ENCODE measurements at regions of chr2 and their contacts with region 1.

Region 1: GRCh38 chr2:190979906-190980629 is 33.9 kb downstream of the STAT1 start:
- DNase-seq: no peak
- H3K4me3 ChIP-seq: no peak overlapping the region
- H3K4me3 Mint-ChIP-seq: no peak overlapping the region
- H3K27ac ChIP-seq: peak overlapping the region in 1 of 2 donors; percentile 39
- H3K27ac Mint-ChIP-seq: peak overlapping the region in 5 of 7 donors; percentile 41 to 84 (median 64)
- H3K4me1 ChIP-seq: no peaks in the 10 kb centered on the region
- H3K4me1 Mint-ChIP-seq: no peaks in the 10 kb centered on the region
- H3K27me3 ChIP-seq: no peaks in the 10 kb centered on the region
- H3K27me3 Mint-ChIP-seq: no peaks in the 10 kb centered on the region
- CTCF ChIP-seq: no peak

Region 2: GRCh38 chr2:189474526-189474925 is 1505.5 kb before region 1 on chr2:
- intact Hi-C with region 1: loop called in 1 of 2 experiments (anchors 5 kb)
- DNase-seq: no peak
- H3K4me3 ChIP-seq: no peak overlapping the region
- H3K4me3 Mint-ChIP-seq: no peak overlapping the region
- H3K27ac ChIP-seq: no peak overlapping the region
- H3K27ac Mint-ChIP-seq: peak overlapping the region in 2 of 7 donors; percentile 21 to 26
- H3K4me1 ChIP-seq: no peaks in the 10 kb centered on the region
- H3K4me1 Mint-ChIP-seq: no peaks in the 10 kb centered on the region
- H3K27me3 ChIP-seq: no peaks in the 10 kb centered on the region
- H3K27me3 Mint-ChIP-seq: no peaks in the 10 kb centered on the region
- CTCF ChIP-seq: no peak

Region 3: DNA sequence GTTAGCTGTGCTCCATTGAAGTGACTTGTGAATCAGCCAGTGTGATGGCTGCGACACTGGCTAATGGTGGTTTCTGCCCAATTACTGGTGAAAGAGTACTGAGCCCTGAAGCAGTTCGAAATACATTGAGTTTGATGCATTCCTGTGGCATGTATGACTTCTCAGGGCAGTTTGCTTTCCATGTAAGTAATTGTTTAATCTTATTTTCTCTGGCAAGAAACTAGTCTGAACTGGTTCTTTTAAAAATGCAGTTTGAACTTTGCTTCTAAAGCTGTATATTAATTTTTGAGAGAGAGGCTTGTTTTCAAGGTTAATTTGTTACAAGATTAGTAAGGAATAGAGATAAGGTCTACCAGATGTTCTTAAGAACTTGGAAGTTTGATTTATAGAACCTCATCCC is 52.8 kb before region 1 on chr2:
- intact Hi-C with region 1: no loop called
- DNase-seq: no peak
- H3K4me3 ChIP-seq: no peak overlapping the region
- H3K4me3 Mint-ChIP-seq: no peak overlapping the region
- H3K27ac ChIP-seq: no peak overlapping the region
- H3K27ac Mint-ChIP-seq: peak overlapping the region in 1 of 7 donors; percentile 42
- H3K4me1 ChIP-seq: no peaks in the 10 kb centered on the region
- H3K4me1 Mint-ChIP-seq: peaks cover 10% of the 10 kb centered on the region
- H3K27me3 ChIP-seq: no peaks in the 10 kb centered on the region
- H3K27me3 Mint-ChIP-seq: no peaks in the 10 kb centered on the region
- CTCF ChIP-seq: no peak

Region 4: DNA sequence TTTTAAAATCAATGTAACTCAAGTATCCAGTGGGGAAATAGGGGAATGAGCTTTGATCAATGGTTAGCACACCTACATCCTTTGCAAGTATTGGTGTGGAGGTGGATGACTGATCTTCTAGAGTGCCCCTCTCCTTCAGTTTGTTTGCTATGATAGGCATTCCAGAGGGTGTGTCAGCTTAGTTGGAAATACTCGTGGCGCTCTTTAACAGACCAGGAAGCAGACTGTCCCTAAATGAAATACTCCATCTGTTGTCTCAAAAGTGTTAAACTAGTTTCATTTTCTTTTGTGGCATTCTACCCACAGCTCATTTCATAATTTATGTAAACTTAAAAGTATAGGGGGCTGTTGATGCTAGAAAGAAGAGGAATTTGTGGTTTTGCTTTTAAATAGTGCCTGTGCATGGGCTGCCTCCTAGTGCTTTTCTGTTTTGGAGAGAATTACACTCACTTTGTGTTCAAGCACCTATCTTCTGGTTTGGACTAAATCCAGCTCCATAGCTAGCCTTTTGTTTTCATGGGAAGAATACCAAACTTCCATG is 32.3 kb before region 1 on chr2:
- intact Hi-C with region 1: no loop called
- DNase-seq: peak; percentile 4 to 11 (median 7)
- H3K4me3 ChIP-seq: peak overlapping the region in 2 of 3 experiments; percentile 5 to 46
- H3K4me3 Mint-ChIP-seq: peak overlapping the region; percentile 25 to 68
- H3K27ac ChIP-seq: peak overlapping the region in 1 of 2 donors; percentile 43
- H3K27ac Mint-ChIP-seq: peak overlapping the region in 4 of 7 donors; percentile 42 to 75 (median 52)
- H3K4me1 ChIP-seq: peaks cover 7 to 12% of the 10 kb centered on the region in 2 donors
- H3K4me1 Mint-ChIP-seq: peaks cover 11% of the 10 kb centered on the region
- H3K27me3 ChIP-seq: no peaks in the 10 kb centered on the region
- H3K27me3 Mint-ChIP-seq: no peaks in the 10 kb centered on the region
- CTCF ChIP-seq: peak; percentile 17

Region 5: DNA sequence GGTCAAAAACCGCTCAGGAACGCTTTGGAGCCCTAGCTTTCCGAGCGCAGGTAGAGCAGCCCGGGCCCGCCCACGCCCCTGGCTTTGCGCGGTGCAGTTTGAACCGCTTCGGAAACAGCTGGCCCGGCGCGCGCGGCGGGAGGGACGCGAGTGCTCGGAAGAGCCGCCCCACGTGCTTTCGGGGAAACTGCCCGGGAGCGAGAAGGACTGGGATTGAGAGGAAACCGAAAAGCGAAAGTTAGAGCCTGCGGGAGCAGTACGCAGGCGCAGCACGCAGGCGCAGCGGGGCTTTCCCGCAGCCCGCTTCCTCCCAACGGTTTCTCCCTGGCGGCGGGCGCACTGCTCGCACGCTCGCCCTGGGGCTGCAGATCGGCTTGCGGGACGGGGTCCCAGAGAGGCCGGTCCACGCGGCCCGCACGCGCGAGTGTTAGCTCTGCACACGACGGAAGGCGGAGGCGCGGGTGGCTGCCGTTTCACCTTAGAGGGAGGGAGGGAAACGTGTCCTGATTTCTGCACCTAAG is 40.2 kb after region 1 on chr2:
- intact Hi-C with region 1: no loop called
- DNase-seq: peak; percentile 97 to 98 (median 98)
- H3K4me3 ChIP-seq: peak overlapping the region; percentile 58 to 94 (median 87)
- H3K4me3 Mint-ChIP-seq: no peak overlapping the region
- H3K27ac ChIP-seq: peak overlapping the region; percentile 87 to 99
- H3K27ac Mint-ChIP-seq: no peak overlapping the region
- H3K4me1 ChIP-seq: peaks cover 26 to 41% of the 10 kb centered on the region in 2 donors
- H3K4me1 Mint-ChIP-seq: peaks cover 10% of the 10 kb centered on the region
- H3K27me3 ChIP-seq: no peaks in the 10 kb centered on the region
- H3K27me3 Mint-ChIP-seq: peaks cover 0 to 2% (median 0%) of the 10 kb centered on the region in 3 donors
- CTCF ChIP-seq: no peak

Region 6: GRCh38 chr2:191038241-191038725 is 58.2 kb after region 1 on chr2:
- intact Hi-C with region 1: no loop called
- DNase-seq: peak in 2 of 3 donors; percentile 35 to 36
- H3K4me3 ChIP-seq: no peak overlapping the region
- H3K4me3 Mint-ChIP-seq: peak overlapping the region in 1 of 2 donors; percentile 51
- H3K27ac ChIP-seq: peak overlapping the region in 1 of 2 donors; percentile 10
- H3K27ac Mint-ChIP-seq: peak overlapping the region; percentile 55 to 86 (median 76)
- H3K4me1 ChIP-seq: peaks cover 13 to 19% of the 10 kb centered on the region in 2 donors
- H3K4me1 Mint-ChIP-seq: peaks cover 25% of the 10 kb centered on the region
- H3K27me3 ChIP-seq: no peaks in the 10 kb centered on the region
- H3K27me3 Mint-ChIP-seq: peaks cover 0 to 1% (median 0%) of the 10 kb centered on the region in 3 donors
- CTCF ChIP-seq: no peak